GM10248 (cell line): ENCODE measurements at regions of chr7 and their contacts with region 1.

Region 1: GRCh38 chr7:23546897-23547572 is 15.3 kb upstream of the TRA2A start:
- DNase-seq: peak; percentile 82
- CTCF ChIP-seq: peak; percentile 91

Region 2: GRCh38 chr7:23712368-23713284 is 165.6 kb after region 1 on chr7:
- CTCF ChIA-PET with region 1: interaction called, 110 read pairs
- POLR2A ChIA-PET with region 1: no interaction called
- DNase-seq: peak; percentile 56
- CTCF ChIP-seq: peak; percentile 29